Right lobe of liver (tissue), 6 donors: ENCODE measurements at regions of chr20 and their contacts with region 1.

Region 1: GRCh38 chr20:23058240-23058639 is 8.8 kb upstream of the THBD start:
- DNase-seq: no peak
- ATAC-seq: no peak
- H3K4me3 ChIP-seq: no peak overlapping the region
- H3K27ac ChIP-seq: no peak overlapping the region
- H3K4me1 ChIP-seq: peaks cover 0 to under 1% (median 0%) of the 10 kb centered on the region in 4 donors
- H3K27me3 ChIP-seq: no peaks in the 10 kb centered on the region
- CTCF ChIP-seq: no peak
- POLR2A ChIP-seq: no peak

Region 2: GRCh38 chr20:23136893-23137750 is 78.9 kb after region 1 on chr20:
- intact Hi-C with region 1: loop called in 1 of 2 experiments (anchors 5 kb)
- DNase-seq: peak in 2 of 3 donors; percentile 42 to 50
- ATAC-seq: no peak
- H3K4me3 ChIP-seq: no peak overlapping the region
- H3K27ac ChIP-seq: no peak overlapping the region
- H3K4me1 ChIP-seq: no peaks in the 10 kb centered on the region
- H3K27me3 ChIP-seq: no peaks in the 10 kb centered on the region
- CTCF ChIP-seq: no peak
- POLR2A ChIP-seq: no peak

Region 3: GRCh38 chr20:23245553-23246181 is 187.4 kb after region 1 on chr20:
- intact Hi-C with region 1: no loop called
- DNase-seq: peak; percentile 61 to 67 (median 64)
- ATAC-seq: peak; percentile 71 to 86 (median 82)
- H3K4me3 ChIP-seq: no peak overlapping the region
- H3K27ac ChIP-seq: no peak overlapping the region
- H3K4me1 ChIP-seq: no peaks in the 10 kb centered on the region
- H3K27me3 ChIP-seq: no peaks in the 10 kb centered on the region
- CTCF ChIP-seq: peak; percentile 38 to 49 (median 43)
- POLR2A ChIP-seq: no peak